HEK293T (cell line): ENCODE measurements at regions of chr22 and their contacts with region 1.

Region 1: GRCh38 chr22:29154364-29155048 is 51.2 kb upstream of the EMID1 start:
- DNase-seq: peak; percentile 95

Region 2: DNA sequence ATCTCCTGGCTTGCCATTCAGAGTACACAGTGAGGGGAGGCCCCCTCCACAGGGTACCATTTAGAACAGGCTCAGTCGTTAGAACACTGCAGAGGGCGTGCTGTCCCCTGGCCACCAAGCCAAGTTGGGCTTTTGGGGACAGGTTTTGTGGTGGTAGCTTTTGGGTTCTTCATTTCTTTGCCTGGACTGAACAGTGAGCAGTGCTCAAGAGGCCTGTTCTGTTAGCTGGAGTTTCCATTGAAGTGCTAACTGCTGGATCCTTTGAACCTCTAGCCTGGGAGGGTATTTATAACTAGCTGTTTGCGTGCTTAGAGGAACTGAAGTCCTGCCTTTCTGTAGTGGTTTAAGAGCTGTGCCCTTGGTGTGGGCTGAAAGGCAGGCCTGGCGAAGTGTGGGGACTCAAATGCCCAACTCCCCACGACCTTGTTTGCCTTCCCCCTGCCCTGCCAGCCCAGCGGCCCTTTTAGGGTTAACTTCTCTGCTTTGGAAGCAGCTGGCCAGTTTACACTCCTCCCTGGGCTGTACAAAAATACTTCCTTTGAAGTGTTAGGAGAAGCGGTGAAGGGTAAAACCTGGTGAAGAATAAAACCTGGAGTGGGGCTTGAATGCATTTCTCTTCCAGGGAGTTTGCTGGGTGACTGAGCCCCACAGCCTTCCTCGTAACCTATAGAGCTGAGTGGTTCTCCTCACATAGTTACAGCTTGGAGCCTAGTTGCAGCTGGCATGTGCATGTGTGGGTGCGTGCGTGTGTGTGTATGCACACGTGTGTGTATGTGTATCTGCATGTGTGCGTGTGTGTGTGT is 236.6 kb before region 1 on chr22:
- CTCF ChIA-PET with region 1: no interaction called
- POLR2A ChIA-PET with region 1: no interaction called
- DNase-seq: no peak

Region 3: DNA sequence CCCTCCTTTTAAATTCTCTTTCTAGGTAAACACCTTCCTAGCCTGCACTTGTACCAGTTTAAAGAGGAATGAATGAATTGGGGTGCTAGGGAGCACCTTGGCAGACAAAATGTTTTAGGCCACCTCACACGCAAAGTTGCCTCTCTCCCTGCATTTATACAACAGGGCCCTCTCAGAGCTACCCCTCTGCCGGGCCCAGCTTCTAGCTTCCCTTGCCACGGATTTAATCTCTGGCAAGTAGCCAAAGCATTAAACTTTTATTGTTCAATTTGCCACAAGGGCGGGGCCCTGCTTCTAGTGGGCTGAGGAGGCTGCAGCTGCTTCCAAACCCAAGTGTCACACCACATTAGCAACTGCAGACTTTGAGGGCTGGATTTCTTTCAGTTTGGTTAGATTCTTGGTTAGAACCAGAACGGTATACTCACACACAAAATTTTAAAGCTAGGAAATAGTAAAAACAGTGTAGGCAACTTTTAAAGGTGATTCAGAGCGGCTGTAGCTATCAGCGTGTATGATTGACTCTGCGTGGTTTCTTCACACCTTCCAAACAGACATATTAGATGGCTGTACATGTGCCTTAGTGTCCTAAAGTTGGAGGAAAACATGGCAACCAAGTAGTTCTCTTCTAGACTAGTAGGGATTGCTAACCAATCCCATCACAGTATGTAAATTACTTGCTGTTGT is 75.1 kb before region 1 on chr22:
- CTCF ChIA-PET with region 1: interaction called, 10 read pairs
- POLR2A ChIA-PET with region 1: no interaction called
- DNase-seq: peak; percentile 79

Region 4: DNA sequence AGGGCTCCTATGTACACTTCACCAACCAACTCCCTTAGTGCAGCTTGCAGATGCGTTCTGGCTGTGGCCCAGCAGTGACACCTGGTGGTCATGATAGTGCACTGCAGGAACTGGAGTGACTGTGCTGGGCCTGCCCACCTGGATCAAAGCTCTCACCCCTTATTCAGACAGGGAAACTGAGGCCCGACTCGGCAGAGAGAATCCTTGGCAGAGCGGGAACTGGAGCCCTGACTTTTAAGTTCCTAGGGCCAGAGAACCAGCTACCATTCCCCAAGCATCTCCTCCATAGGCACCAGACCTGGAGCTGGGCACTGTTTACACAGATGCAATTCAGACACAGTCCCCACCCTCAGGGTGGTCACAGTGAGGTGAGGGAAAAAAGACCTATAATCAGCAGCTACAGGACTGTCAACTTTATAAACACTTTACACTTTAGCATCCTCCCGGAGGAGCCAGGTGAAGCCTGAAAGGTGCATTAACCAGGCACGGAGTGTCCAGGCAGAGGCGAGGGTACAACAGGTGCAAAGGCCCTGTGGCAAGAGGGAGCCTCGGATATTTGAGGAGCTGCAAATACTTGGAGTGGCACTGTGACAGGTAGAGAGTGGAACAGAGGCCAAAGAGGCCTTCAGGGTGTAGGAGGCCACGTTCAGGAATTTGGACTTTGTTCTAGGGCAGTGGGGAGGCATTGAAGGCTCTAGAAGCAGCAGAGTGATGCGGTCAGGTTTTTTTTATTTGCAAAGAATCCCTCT is 91.3 kb after region 1 on chr22:
- CTCF ChIA-PET with region 1: interaction called, 10 read pairs
- POLR2A ChIA-PET with region 1: no interaction called
- DNase-seq: peak; percentile 93

Region 5: GRCh38 chr22:29267858-29268417 is 113.4 kb after region 1 on chr22 and contains the starts of genes EWSR1 and RHBDD3:
- CTCF ChIA-PET with region 1: no interaction called
- POLR2A ChIA-PET with region 1: no interaction called
- DNase-seq: peak; percentile 97